Posterior vena cava (tissue), 2 donors: ENCODE measurements at regions of chr14 and their contacts with region 1.

Region 1: DNA sequence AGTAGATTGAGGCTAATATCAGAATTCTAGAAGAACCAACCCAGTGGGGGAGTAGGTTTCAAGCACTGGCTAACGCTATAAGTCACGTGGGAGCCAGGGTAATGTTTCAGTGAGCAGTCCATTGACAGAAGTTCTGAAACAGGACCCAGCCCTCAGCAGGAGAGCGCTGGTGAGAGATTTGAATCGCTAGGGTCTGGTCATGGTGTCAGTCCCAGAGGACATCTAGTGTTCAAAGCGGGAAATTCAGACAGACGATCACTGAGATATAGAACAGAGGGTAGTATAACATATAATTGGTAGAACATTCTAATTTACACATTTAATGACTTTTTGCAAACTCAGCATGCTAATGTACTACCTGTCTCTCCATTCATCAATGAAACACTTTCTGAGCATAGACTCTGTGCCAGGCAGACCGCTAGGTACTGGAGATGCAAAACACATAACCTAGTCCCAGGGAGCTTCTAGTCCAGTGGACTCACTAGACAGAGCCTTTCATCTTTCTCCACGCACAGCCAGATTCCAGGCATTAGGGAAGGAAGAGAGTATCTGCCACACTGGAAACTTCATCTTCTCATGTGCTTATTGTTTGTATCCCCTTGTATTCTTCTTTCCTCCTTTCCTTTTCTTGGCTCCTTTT is 35.4 kb upstream of the RNASE3 start:
- DNase-seq: no peak

Region 2: GRCh38 chr14:19918044-19918443 is 937.7 kb before region 1 on chr14:
- intact Hi-C with region 1: no loop called
- DNase-seq: no peak

Region 3: GRCh38 chr14:20707622-20708021 is 148.2 kb before region 1 on chr14:
- intact Hi-C with region 1: loop called in 1 of 2 experiments (anchors 5 kb)
- DNase-seq: no peak

Region 4: GRCh38 chr14:20970983-20971704 is 115.4 kb after region 1 on chr14:
- intact Hi-C with region 1: loop called (anchors 10 kb)
- DNase-seq: peak; percentile 96